Mammary epithelial cell (primary cell): ENCODE measurements at regions of chrX and their contacts with region 1.

Region 1: DNA sequence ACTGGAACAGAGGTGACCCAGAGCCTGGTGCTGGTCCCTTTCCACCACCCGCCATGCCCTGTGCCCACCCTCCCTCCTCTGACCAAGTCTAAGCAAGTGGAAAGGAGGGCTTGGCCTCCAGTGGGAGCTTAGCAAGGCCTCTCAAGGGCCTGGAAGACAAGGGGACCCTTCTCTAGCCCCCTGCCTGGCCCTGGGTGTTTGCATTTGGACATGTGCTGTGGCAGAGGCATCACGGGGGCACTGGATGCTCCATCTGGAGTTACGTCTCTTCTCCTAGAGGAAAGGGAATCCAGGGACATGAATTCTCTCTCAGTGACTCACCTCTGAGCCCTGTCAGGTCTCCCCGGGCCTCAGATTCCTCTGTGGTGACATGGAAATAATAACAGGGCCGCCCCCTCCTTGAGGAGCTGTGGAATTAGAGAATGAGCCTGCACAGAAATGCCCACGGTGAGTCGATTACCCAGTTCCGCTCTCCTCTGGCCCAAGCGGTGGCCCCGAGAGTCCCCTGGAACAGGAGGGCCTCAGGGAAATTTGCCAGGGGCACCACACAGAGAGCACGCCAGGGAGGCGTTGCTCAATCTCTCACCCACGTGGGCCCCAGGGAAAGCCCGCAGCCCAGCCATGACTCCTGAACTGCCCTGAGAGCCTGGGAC is 189.7 kb downstream of the BCOR start:
- DNase-seq: peak; percentile 86
- H3K4me3 ChIP-seq: no peak overlapping the region
- H3K27ac ChIP-seq: no peak overlapping the region
- H3K4me1 ChIP-seq: peaks cover 25% of the 10 kb centered on the region
- H3K27me3 ChIP-seq: no peaks in the 10 kb centered on the region
- CTCF ChIP-seq: no peak

Region 2: GRCh38 chrX:39755143-39756032 is 152.7 kb before region 1 on chrX:
- CTCF ChIA-PET with region 1: no interaction called
- dilution Hi-C with region 1: no loop called
- in situ Hi-C with region 1: no loop called
- intact Hi-C with region 1: loop called (anchors 10 kb)
- DNase-seq: peak; percentile 89
- H3K4me3 ChIP-seq: no peak overlapping the region
- H3K27ac ChIP-seq: no peak overlapping the region
- H3K4me1 ChIP-seq: peaks cover 21% of the 10 kb centered on the region
- H3K27me3 ChIP-seq: no peaks in the 10 kb centered on the region
- CTCF ChIP-seq: no peak

Region 3: DNA sequence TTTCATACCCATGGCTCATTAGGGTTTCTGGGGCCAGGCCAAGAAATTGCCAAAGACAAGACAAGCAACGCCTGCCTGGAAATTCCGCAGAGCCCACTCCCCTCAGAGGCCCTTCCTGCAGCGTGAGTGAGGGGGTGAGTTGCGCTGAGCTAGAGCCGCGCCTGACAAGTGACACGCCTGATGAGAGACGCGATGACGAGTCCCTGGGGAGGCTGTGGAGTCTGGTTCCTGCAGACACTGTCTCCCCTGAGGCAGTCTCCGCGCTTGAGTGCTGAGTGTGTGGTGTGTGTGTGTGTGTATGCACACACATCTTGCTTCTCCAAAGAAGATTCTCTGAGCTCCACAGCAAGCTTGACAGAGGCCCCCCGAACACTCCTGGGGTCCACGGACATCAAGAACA is 80.1 kb before region 1 on chrX:
- CTCF ChIA-PET with region 1: no interaction called
- dilution Hi-C with region 1: no loop called
- in situ Hi-C with region 1: no loop called
- intact Hi-C with region 1: loop called (anchors 5 kb)
- DNase-seq: no peak
- H3K4me3 ChIP-seq: no peak overlapping the region
- H3K27ac ChIP-seq: no peak overlapping the region
- H3K4me1 ChIP-seq: no peaks in the 10 kb centered on the region
- H3K27me3 ChIP-seq: no peaks in the 10 kb centered on the region
- CTCF ChIP-seq: no peak

Region 4: DNA sequence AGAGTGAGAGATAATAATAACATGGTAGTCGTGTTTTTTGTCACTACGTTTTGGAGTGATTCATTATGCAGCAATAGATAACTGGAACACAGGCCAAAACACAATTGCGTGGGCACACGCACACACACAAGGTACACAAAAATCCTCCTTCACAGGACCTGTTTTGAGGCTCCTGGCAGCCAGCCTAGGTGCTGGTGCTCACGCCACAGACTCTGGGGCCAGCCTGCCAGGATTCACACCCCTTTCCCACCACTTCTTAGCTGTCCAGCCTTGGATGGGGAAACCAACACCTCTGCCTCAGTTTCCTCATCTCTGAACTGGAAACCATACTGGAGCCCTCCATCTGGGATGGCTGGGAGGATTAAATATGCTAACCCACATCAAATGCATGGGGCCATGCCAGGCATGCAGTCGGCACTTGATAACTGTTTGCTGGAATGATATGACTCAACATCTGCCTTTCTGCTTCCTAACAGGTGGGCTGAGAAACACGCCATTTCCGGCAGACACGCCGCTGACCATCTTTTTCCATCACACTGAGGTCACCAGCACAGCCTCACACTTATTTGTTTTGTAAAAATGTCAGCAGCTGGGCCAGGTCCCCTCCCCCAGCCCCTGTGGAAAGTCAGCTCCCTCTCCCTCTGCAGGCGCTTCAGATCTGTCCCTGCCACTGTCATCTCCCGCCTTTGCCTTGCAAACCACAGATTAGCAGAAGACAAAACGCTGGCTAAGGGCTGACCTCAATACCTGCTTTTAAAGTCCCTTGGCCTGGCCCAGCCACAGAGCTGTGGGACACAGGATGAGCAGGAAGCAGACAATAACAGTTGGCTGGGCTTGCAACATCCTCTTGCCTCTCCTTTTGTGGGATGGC is 47.9 kb before region 1 on chrX:
- CTCF ChIA-PET with region 1: no interaction called
- dilution Hi-C with region 1: no loop called
- in situ Hi-C with region 1: no loop called
- intact Hi-C with region 1: no loop called
- DNase-seq: peak; percentile 57
- H3K4me3 ChIP-seq: no peak overlapping the region
- H3K27ac ChIP-seq: no peak overlapping the region
- H3K4me1 ChIP-seq: peaks cover 11% of the 10 kb centered on the region
- H3K27me3 ChIP-seq: no peaks in the 10 kb centered on the region
- CTCF ChIP-seq: no peak

Region 5: DNA sequence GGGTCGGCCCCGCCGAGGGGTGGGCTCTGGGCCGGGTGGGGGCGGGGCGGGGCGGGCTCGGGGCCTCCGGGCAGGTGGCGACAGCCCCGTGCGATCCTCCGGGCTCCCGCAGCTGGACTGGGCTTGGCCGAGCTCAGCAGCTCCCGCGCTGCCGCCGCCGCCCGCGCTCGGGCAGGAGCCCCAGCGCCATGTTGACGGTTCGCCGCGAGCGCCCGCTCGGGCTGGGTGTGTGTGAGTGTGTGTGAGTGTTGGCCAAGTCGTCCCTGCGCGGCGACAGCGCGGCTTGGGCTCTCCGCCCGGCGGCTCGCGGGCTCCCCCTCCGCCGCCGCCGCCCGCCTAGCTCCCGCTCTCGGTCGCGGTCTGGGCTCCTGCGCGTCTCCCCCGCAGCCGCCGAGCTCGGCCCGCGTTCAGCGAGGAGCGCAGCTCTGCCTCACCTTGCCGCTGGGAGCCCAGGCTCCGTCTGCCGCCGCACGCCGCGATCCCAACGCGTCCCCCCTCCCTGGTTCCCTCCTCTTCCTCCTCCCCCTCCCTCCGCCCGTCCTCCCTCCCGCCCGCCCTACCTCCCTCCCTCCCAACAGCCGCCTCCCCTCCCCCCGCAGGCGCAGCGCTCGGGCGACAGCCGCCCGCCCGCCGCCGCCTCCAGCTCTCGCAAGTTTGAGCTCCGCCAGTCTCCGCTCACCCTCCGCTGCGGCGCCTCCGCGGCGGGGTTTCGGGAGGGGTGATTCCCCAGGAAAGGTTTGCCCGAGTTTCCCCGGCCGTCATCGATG is 189.6 kb after region 1 on chrX and contains the start of gene BCOR:
- CTCF ChIA-PET with region 1: no interaction called
- dilution Hi-C with region 1: no loop called
- in situ Hi-C with region 1: no loop called
- intact Hi-C with region 1: loop called (anchors 2 kb)
- DNase-seq: peak; percentile 63
- H3K4me3 ChIP-seq: peak within 1 kb of the TSS; percentile 48 to 64 (median 62)
- H3K27ac ChIP-seq: peak within 1 kb of the TSS; percentile 22
- H3K4me1 ChIP-seq: peaks cover 24% of the 10 kb centered on the region
- H3K27me3 ChIP-seq: peaks cover 23% of the 10 kb centered on the region
- CTCF ChIP-seq: no peak
- total RNA-seq, gene BCOR: 7.2 to 9.2 TPM